Esophagus muscularis mucosa (tissue), 4 donors: ENCODE measurements at regions of chr10 and their contacts with region 1.

Region 1: GRCh38 chr10:12348870-12349628 is at the start of gene CAMK1D:
- DNase-seq: peak; percentile 96
- H3K4me3 ChIP-seq: peak within 1 kb of the TSS; percentile 76 to 96 (median 89)
- H3K27ac ChIP-seq: peak within 1 kb of the TSS; percentile 95 to 97 (median 96)
- H3K4me1 ChIP-seq: peaks cover 10 to 40% (median 31%) of the 10 kb centered on the region in 4 donors
- H3K27me3 ChIP-seq: no peaks in the 10 kb centered on the region
- CTCF ChIP-seq: peak; percentile 48 to 54 (median 53)
- EP300 ChIP-seq: no peak
- POLR2A ChIP-seq: no peak
- total RNA-seq, gene CAMK1D: 8.4 to 15.4 (median 11.3) TPM

Region 2: GRCh38 chr10:12214763-12215218 is 134.3 kb before region 1 on chr10:
- intact Hi-C with region 1: loop called (anchors 10 kb)
- DNase-seq: no peak
- H3K4me3 ChIP-seq: peak overlapping the region; percentile 20 to 37 (median 36)
- H3K27ac ChIP-seq: peak overlapping the region; percentile 63 to 73 (median 68)
- H3K4me1 ChIP-seq: peaks cover 7 to 46% (median 39%) of the 10 kb centered on the region in 4 donors
- H3K27me3 ChIP-seq: no peaks in the 10 kb centered on the region
- CTCF ChIP-seq: peak; percentile 63 to 73 (median 73)
- EP300 ChIP-seq: no peak
- POLR2A ChIP-seq: no peak

Region 3: DNA sequence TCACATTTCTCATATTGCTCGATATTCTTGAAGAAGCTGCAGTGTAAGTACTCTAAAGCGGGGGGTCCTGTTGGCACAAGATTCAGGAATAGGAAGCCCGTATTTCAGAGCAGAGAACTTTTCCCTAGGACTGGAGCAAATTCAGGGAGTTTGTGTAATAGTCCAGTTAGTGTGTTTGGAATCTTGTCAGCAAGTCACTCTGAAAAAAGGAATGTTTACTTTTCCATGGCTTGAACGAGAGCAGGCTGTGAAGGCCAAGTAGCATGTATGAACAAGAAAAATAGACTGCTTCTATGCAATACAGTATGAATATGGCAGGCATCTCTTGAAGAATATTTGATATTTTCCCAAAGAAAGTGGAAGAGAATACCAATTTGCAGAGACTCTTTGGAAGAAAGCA is 113.3 kb before region 1 on chr10:
- intact Hi-C with region 1: no loop called
- DNase-seq: no peak
- H3K4me3 ChIP-seq: peak overlapping the region in 1 of 4 donors; percentile 10
- H3K27ac ChIP-seq: peak overlapping the region; percentile 55 to 72 (median 68)
- H3K4me1 ChIP-seq: peaks cover 11 to 46% (median 38%) of the 10 kb centered on the region in 4 donors
- H3K27me3 ChIP-seq: no peaks in the 10 kb centered on the region
- CTCF ChIP-seq: no peak
- EP300 ChIP-seq: no peak
- POLR2A ChIP-seq: no peak

Region 4: GRCh38 chr10:12271210-12271540 is 77.9 kb before region 1 on chr10:
- intact Hi-C with region 1: loop called (anchors 5 kb)
- DNase-seq: no peak
- H3K4me3 ChIP-seq: peak overlapping the region in 2 of 4 donors; percentile 1 to 3
- H3K27ac ChIP-seq: peak overlapping the region; percentile 66 to 81 (median 78)
- H3K4me1 ChIP-seq: peaks cover 3 to 21% (median 18%) of the 10 kb centered on the region in 4 donors
- H3K27me3 ChIP-seq: no peaks in the 10 kb centered on the region
- CTCF ChIP-seq: no peak
- EP300 ChIP-seq: no peak
- POLR2A ChIP-seq: no peak

Region 5: DNA sequence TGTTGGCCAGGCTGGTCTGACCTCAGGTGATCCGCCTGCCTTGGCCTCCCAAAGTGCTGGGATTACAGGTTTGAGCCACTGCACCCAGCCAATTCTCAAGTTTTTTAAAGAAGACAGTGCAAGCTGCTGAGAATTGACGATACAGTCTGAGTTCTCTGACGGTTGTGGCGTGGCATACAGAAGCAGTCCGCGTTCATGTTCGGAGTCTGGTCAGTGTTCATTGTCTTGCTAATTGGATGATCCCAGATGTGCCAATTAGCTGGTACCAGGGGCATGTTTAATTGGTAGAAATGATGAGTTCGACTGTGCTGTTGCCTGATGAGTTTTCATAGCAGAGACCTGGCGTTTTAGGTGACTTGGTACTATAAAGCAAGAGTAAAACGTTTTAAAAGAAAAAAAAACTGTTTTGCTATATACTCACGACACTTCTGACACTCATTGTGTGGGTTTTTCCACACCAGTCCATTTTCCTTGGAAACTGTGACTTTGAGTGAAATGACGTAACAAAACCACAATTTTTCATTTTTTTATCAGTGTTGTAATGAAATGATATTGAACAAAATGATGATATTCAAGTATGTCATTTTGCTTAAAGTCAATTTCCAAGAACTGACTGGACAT is 32.6 kb after region 1 on chr10:
- intact Hi-C with region 1: no loop called
- DNase-seq: no peak
- H3K4me3 ChIP-seq: no peak overlapping the region
- H3K27ac ChIP-seq: no peak overlapping the region
- H3K4me1 ChIP-seq: peaks cover 0 to 21% (median 15%) of the 10 kb centered on the region in 4 donors
- H3K27me3 ChIP-seq: no peaks in the 10 kb centered on the region
- CTCF ChIP-seq: no peak
- EP300 ChIP-seq: no peak
- POLR2A ChIP-seq: no peak

Region 6: GRCh38 chr10:12656518-12657142 is 307.6 kb after region 1 on chr10:
- intact Hi-C with region 1: loop called (anchors 10 kb)
- DNase-seq: no peak
- H3K4me3 ChIP-seq: no peak overlapping the region
- H3K27ac ChIP-seq: no peak overlapping the region
- H3K4me1 ChIP-seq: no peaks in the 10 kb centered on the region
- H3K27me3 ChIP-seq: no peaks in the 10 kb centered on the region
- CTCF ChIP-seq: peak; percentile 71 to 78 (median 75)
- EP300 ChIP-seq: no peak
- POLR2A ChIP-seq: no peak

Region 7: GRCh38 chr10:12710594-12711349 is 361.7 kb after region 1 on chr10:
- intact Hi-C with region 1: loop called (anchors 5 kb)
- DNase-seq: peak; percentile 96
- H3K4me3 ChIP-seq: no peak overlapping the region
- H3K27ac ChIP-seq: peak overlapping the region; percentile 80 to 85 (median 82)
- H3K4me1 ChIP-seq: peaks cover 37 to 59% (median 58%) of the 10 kb centered on the region in 4 donors
- H3K27me3 ChIP-seq: no peaks in the 10 kb centered on the region
- CTCF ChIP-seq: peak; percentile 92 to 97 (median 93)
- EP300 ChIP-seq: no peak
- POLR2A ChIP-seq: no peak